Colonic mucosa (tissue), 4 donors: ENCODE measurements at regions of chr5 and their contacts with region 1.

Region 1: DNA sequence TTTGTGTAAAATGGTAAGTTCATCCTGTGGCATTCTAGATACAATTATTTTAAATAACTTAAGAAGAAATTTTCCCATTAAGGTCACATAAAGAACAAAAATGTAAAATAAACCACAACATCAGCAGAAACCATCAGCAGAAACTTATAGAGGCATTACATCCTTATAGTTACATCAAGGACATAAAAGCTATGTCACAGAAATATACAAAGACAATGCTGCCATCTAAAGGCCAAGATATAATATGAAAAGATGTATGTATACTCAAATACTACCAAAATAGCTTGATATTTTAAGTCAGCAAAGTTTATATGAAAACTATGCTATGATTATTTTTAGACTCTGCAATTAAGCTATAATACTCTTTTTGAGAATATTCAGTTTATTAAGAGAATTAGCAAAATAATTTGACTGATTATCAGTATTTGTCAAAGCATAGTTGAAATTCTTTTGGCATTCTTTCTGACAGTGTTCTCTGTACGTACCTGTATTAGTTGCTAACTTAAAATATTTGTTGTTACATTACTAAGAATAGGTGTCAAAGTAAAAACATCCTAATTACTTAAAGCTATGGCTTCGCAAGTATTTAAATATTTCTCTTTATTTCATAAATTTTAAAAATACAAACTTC is 36.2 kb downstream of the FBXL17 start:
- DNase-seq: no peak
- H3K4me3 ChIP-seq: no peak overlapping the region
- H3K27ac ChIP-seq: peak overlapping the region; percentile 47
- H3K4me1 ChIP-seq: no peaks in the 10 kb centered on the region
- H3K27me3 ChIP-seq: no peaks in the 10 kb centered on the region
- CTCF ChIP-seq: peak; percentile 40

Region 2: GRCh38 chr5:108148715-108149139 is 196.9 kb before region 1 on chr5:
- intact Hi-C with region 1: loop called (anchors 5 kb)
- DNase-seq: no peak
- H3K4me3 ChIP-seq: no peak overlapping the region
- H3K27ac ChIP-seq: no peak overlapping the region
- H3K4me1 ChIP-seq: no peaks in the 10 kb centered on the region
- H3K27me3 ChIP-seq: no peaks in the 10 kb centered on the region
- CTCF ChIP-seq: peak; percentile 48

Region 3: GRCh38 chr5:108260117-108260857 is 85.4 kb before region 1 on chr5:
- intact Hi-C with region 1: loop called (anchors 5 kb)
- DNase-seq: peak; percentile 81
- H3K4me3 ChIP-seq: no peak overlapping the region
- H3K27ac ChIP-seq: no peak overlapping the region
- H3K4me1 ChIP-seq: no peaks in the 10 kb centered on the region
- H3K27me3 ChIP-seq: no peaks in the 10 kb centered on the region
- CTCF ChIP-seq: peak; percentile 89